ENCODE measurements at regions of chr1 and their contacts with region 1.

Region 1: DNA sequence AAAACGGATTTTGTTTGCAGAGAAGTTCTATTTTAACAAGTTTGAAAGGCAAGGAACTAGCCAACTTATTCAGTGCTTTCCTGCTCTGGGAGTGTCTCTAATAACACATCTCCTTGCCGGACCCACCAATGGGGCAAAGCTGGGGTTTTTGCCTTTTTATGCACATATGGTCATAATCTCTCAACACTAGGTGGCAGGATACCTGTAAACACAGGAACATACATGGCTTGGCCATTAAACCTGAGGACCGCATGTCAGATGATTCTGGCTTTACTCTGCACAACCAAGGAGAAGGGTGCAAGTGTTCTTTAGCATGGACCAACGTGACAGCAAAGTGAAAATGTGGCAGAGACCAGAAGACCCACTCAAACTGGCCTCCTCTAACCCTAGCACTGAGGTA is 4.9 kb downstream of the TMEM9 start:
- DNase-seq: peak; percentile 64 to 85
- ATAC-seq: peak; percentile 54 to 65; a peak in 5 of 6 replicates
- H3K4me3 ChIP-seq: no peak overlapping the region
- H3K27ac ChIP-seq: no peak overlapping the region
- H3K4me1 ChIP-seq: peaks cover 7% of the 10 kb centered on the region
- CTCF ChIP-seq: peak; percentile 78
- EP300 ChIP-seq: no peak
- POLR2A ChIP-seq: no peak
- RAD21 ChIP-seq: peak; percentile 49 to 61

Region 2: DNA sequence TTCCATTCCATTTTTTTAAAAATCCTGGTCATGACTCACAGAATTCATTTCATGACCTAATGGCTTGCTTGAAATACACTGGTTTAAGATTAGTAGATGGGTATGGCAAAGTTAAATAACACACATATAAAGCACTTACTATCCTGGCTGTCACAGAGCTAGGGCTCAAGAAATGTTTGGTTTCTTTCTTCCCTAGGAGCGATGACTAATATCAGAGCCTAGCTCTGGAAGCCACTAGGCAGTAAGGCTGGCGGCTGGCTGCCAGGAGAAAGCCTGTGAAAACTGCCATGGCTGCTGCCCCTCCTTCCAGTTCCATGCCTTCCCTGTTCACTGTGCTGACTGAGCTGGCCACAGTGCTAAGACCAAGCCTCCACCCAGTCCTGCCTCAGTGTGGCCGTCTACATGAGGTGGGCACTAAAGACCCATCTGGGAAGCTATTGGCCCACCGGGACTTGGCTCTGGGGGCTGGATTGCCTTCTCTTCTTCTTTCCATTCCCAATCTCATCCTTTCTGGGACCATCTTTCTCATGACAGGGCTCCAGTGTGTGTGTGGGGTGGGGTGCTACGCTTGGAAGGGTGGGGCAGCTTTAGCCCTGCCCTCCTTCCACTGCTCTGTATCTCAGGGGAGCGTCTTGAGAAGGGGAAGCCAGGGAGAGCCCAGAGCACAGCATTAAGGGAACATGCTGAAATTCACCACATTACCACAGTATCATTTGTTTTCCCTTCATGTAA is 11.7 kb before region 1 on chr1:
- CTCF ChIA-PET with region 1: interaction called, 60 read pairs
- POLR2A ChIA-PET with region 1: interaction called, 3 read pairs
- DNase-seq: no peak
- ATAC-seq: peak; percentile 39 to 46; a peak in 5 of 6 replicates
- H3K4me3 ChIP-seq: no peak overlapping the region
- H3K27ac ChIP-seq: peak overlapping the region in 1 of 2 experiments; percentile 16; a peak in 1 of 6 replicates
- H3K4me1 ChIP-seq: peaks cover 13% of the 10 kb centered on the region; the same call in 1 of the 3 replicates
- CTCF ChIP-seq: no peak
- EP300 ChIP-seq: no peak
- POLR2A ChIP-seq: no peak
- RAD21 ChIP-seq: no peak

Region 3: GRCh38 chr1:201170533-201171062 is 21.2 kb after region 1 on chr1:
- CTCF ChIA-PET with region 1: interaction called, 19 read pairs
- POLR2A ChIA-PET with region 1: interaction called, 5 read pairs
- DNase-seq: peak; percentile 92 to 99
- ATAC-seq: peak; percentile 96 to 99
- H3K4me3 ChIP-seq: peak overlapping the region; percentile 53
- H3K27ac ChIP-seq: peak overlapping the region; percentile 81 to 92
- H3K4me1 ChIP-seq: peaks cover 34% of the 10 kb centered on the region
- CTCF ChIP-seq: no peak
- EP300 ChIP-seq: peak in 1 of 2 experiments; percentile 62; a peak in 1 of 5 replicates
- POLR2A ChIP-seq: peak; percentile 61
- RAD21 ChIP-seq: no peak

Region 4: DNA sequence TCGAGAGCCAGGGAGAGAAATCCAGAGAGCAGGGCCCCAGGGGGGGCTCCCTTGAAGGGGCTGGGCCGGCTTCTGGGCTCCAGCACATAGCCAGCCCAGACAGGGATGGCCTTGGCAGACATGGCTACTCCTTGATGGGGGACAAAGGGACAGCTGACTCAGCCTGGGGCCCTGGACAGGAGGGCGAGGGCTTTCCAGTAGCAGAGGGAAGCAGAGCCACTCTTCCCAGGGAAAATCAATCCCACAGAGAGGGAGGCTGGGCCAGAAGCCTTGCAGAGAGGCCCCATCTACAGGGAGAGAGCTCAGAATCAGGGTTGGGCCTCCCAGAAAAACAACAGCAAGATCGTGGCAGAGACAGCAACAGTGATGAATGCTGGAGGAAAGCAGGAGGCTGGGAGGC is 56.8 kb after region 1 on chr1:
- CTCF ChIA-PET with region 1: interaction called, 17 read pairs
- POLR2A ChIA-PET with region 1: no interaction called
- DNase-seq: no peak
- ATAC-seq: no peak; a peak in 1 of 6 replicates
- H3K4me3 ChIP-seq: no peak overlapping the region
- H3K27ac ChIP-seq: no peak overlapping the region
- H3K4me1 ChIP-seq: no peaks in the 10 kb centered on the region
- CTCF ChIP-seq: no peak
- EP300 ChIP-seq: no peak
- POLR2A ChIP-seq: no peak
- RAD21 ChIP-seq: no peak

Region 5: DNA sequence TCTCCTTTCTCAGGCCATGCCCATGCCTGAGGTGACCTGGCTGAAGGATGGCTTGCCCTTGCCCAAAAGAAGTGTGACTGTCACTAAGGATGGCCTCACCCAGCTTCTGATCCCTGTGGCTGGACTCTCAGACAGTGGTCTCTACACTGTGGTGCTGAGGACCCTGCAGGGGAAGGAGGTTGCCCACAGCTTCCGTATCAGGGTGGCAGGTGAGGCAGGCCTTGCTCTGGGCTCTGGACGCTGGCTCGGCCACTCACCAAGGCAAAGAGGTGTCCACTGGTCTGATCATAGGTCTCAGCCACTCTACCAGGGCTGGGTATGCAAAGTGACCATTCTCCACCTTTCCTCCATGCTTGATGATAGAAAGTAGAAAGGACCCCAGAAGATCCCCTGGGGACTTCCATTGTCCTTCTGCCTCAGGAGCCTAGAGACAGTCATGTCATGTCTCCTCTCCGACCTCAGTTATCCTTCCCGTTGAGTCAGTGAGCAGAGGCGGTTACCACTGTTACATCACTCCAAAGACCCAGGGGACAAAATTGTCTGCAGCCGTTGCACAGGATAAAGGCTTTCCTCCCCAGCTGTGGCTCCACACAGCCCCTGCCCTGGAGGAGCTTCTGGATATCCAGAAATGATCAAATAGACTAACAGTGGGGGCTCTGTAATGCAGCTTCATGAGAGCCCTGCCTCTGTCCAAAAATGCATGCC is 75.4 kb after region 1 on chr1:
- CTCF ChIA-PET with region 1: interaction called, 112 read pairs
- POLR2A ChIA-PET with region 1: no interaction called
- DNase-seq: no peak
- ATAC-seq: no peak
- H3K4me3 ChIP-seq: no peak overlapping the region
- H3K27ac ChIP-seq: no peak overlapping the region
- H3K4me1 ChIP-seq: 0 out of 3 replicates have a peak, but pooled peaks cover 4% of the 10 kb centered on the region
- CTCF ChIP-seq: no peak
- EP300 ChIP-seq: no peak
- POLR2A ChIP-seq: no peak
- RAD21 ChIP-seq: no peak

Region 6: GRCh38 chr1:201229771-201230635 is 80.6 kb after region 1 on chr1:
- CTCF ChIA-PET with region 1: interaction called, 112 read pairs
- POLR2A ChIA-PET with region 1: no interaction called
- DNase-seq: no peak
- ATAC-seq: peak; percentile 42 to 68; a peak in 4 of 6 replicates
- H3K4me3 ChIP-seq: no peak overlapping the region
- H3K27ac ChIP-seq: no peak overlapping the region
- H3K4me1 ChIP-seq: no peaks in the 10 kb centered on the region
- CTCF ChIP-seq: peak; percentile 29; the same call in 2 of the 3 replicates
- EP300 ChIP-seq: no peak
- POLR2A ChIP-seq: no peak
- RAD21 ChIP-seq: peak; percentile 36 to 45

Region 7: GRCh38 chr1:201295861-201296260 is 146.5 kb after region 1 on chr1:
- CTCF ChIA-PET with region 1: no interaction called
- POLR2A ChIA-PET with region 1: no interaction called
- DNase-seq: peak; percentile 48 to 64
- ATAC-seq: peak; percentile 48 to 76; a peak in 3 of 6 replicates
- H3K4me3 ChIP-seq: no peak overlapping the region
- H3K27ac ChIP-seq: peak overlapping the region; percentile 30 to 73
- H3K4me1 ChIP-seq: peaks cover 39% of the 10 kb centered on the region
- CTCF ChIP-seq: no peak
- EP300 ChIP-seq: no peak
- POLR2A ChIP-seq: no peak; the same call in 1 of the 2 replicates
- RAD21 ChIP-seq: no peak